Prostate gland (tissue), 2 donors: ENCODE measurements at regions of chr1 and their contacts with region 1.

Region 1: GRCh38 chr1:169485544-169486278 is at the start of gene SLC19A2:
- DNase-seq: peak; percentile 100
- H3K4me3 ChIP-seq: peak within 1 kb of the TSS; percentile 61 to 72
- H3K27ac ChIP-seq: peak within 1 kb of the TSS; percentile 95 to 96
- H3K4me1 ChIP-seq: no peaks in the 10 kb centered on the region
- H3K27me3 ChIP-seq: no peaks in the 10 kb centered on the region
- CTCF ChIP-seq: peak in 2 of 4 experiments; percentile 27 to 52
- POLR2A ChIP-seq: peak; percentile 93
- total RNA-seq, gene SLC19A2: 10.6 to 18.7 TPM

Region 2: GRCh38 chr1:169511316-169512028 is 25.8 kb after region 1 on chr1:
- intact Hi-C with region 1: loop called (anchors 2 kb)
- DNase-seq: no peak
- H3K4me3 ChIP-seq: no peak overlapping the region
- H3K27ac ChIP-seq: peak overlapping the region in 1 of 2 donors; percentile 50
- H3K4me1 ChIP-seq: peaks cover 4% of the 10 kb centered on the region
- H3K27me3 ChIP-seq: no peaks in the 10 kb centered on the region
- CTCF ChIP-seq: no peak
- POLR2A ChIP-seq: no peak